ENCODE measurements at regions of chr17 and their contacts with region 1.

Region 1: GRCh38 chr17:75319904-75320691 is 30.9 kb upstream of the SLC25A19 start:
- DNase-seq: no peak
- H3K4me3 ChIP-seq: no peak overlapping the region
- H3K4me3 Mint-ChIP-seq: no peak overlapping the region
- H3K27ac ChIP-seq: no peak overlapping the region
- H3K27ac Mint-ChIP-seq: no peak overlapping the region
- H3K4me1 ChIP-seq: peaks cover 6% of the 10 kb centered on the region
- H3K4me1 Mint-ChIP-seq: peaks cover 7 to 12% (median 9%) of the 10 kb centered on the region in 3 donors
- H3K27me3 ChIP-seq: no peaks in the 10 kb centered on the region
- H3K27me3 Mint-ChIP-seq: no peaks in the 10 kb centered on the region

Region 2: DNA sequence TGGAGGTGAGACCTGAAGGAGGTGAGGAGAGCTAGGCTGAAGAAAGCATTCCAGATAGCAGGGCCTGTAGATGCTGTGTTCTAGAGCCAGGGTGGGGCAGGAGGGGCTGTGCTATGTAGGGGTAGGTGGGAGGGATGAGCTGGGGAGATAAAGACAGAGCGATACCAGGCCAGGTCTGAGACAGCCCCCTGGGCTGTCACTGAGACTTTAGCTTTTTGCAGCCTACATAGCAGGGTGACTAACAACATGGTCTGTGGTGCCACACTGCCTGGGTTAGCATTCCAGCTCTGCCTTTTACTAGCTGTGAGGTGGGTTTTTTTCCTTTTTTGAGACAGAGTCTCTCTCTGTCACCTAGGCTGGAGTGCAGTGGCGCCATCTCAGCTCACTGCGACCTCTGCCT is 100.3 kb before region 1 on chr17:
- CTCF ChIA-PET with region 1: no interaction called
- POLR2A ChIA-PET with region 1: no interaction called
- DNase-seq: no peak
- H3K4me3 ChIP-seq: no peak overlapping the region
- H3K4me3 Mint-ChIP-seq: no peak overlapping the region
- H3K27ac ChIP-seq: no peak overlapping the region
- H3K27ac Mint-ChIP-seq: peak overlapping the region in 2 of 8 donors; percentile 4 to 69
- H3K4me1 ChIP-seq: no peaks in the 10 kb centered on the region
- H3K4me1 Mint-ChIP-seq: peaks cover 0 to 7% (median 0%) of the 10 kb centered on the region in 3 donors
- H3K27me3 ChIP-seq: no peaks in the 10 kb centered on the region
- H3K27me3 Mint-ChIP-seq: no peaks in the 10 kb centered on the region

Region 3: DNA sequence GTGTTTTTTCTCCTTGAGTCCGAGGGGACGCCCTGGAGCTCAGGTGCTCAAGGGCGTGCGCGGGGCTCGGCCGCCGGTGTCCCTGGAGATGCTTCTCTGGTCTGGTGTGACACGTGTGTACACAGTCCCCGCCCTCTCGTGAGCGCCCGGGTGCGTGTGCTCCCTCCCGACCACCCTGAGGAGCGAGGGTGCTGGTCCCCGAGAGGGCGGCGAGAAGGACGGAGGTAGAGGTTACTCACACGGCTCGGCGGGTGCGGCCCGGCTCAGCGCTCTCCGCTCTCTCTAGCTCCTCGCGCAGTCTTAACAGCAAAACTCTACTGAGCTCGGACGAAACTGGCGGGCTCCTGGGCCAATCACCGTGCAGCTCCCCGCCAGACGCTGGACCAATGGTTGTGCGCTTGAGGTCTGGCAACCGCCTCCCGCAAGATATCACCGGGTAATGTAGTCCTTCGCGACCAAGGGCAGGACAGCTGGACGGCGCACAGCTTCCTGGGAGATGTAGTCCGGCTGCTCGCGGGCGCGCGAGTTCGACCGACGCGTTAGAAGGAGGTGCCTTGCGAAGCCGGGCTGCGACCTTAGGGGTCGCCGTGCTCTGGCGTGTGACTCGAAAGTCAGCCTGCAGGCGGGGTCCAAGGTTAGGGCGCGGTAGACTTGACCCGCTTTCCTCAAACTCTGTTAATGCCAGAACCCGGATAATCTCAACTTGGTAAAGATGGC is 30.8 kb before region 1 on chr17 and contains the start of gene SLC25A19:
- CTCF ChIA-PET with region 1: interaction called, 14 read pairs
- POLR2A ChIA-PET with region 1: interaction called, 3 read pairs
- DNase-seq: peak; percentile 96 to 98 (median 97)
- H3K4me3 ChIP-seq: peak within 1 kb of the TSS; percentile 95
- H3K4me3 Mint-ChIP-seq: peak within 1 kb of the TSS; percentile 95 to 100 (median 98)
- H3K27ac ChIP-seq: peak within 1 kb of the TSS; percentile 96
- H3K27ac Mint-ChIP-seq: peak within 1 kb of the TSS; percentile 95 to 100 (median 100)
- H3K4me1 ChIP-seq: peaks cover 10% of the 10 kb centered on the region
- H3K4me1 Mint-ChIP-seq: peaks cover 10 to 23% (median 18%) of the 10 kb centered on the region in 3 donors
- H3K27me3 ChIP-seq: no peaks in the 10 kb centered on the region
- H3K27me3 Mint-ChIP-seq: peaks cover 0 to 3% of the 10 kb centered on the region in 2 donors
- total RNA-seq, gene SLC25A19: 119 to 126 TPM

Region 4: GRCh38 chr17:75345514-75346167 is 25.5 kb after region 1 on chr17:
- CTCF ChIA-PET with region 1: interaction called, 18 read pairs
- POLR2A ChIA-PET with region 1: no interaction called
- DNase-seq: peak in 3 of 5 donors; percentile 33 to 69 (median 61)
- H3K4me3 ChIP-seq: peak overlapping the region; percentile 33
- H3K4me3 Mint-ChIP-seq: peak overlapping the region; percentile 25 to 85 (median 79)
- H3K27ac ChIP-seq: no peak overlapping the region
- H3K27ac Mint-ChIP-seq: peak overlapping the region; percentile 83 to 98 (median 90)
- H3K4me1 ChIP-seq: peaks cover 83% of the 10 kb centered on the region
- H3K4me1 Mint-ChIP-seq: peaks cover 84 to 98% (median 97%) of the 10 kb centered on the region in 3 donors
- H3K27me3 ChIP-seq: no peaks in the 10 kb centered on the region
- H3K27me3 Mint-ChIP-seq: no peaks in the 10 kb centered on the region

Region 5: GRCh38 chr17:75367317-75367716 is 47.2 kb after region 1 on chr17:
- CTCF ChIA-PET with region 1: no interaction called
- POLR2A ChIA-PET with region 1: no interaction called
- DNase-seq: no peak
- H3K4me3 ChIP-seq: no peak overlapping the region
- H3K4me3 Mint-ChIP-seq: no peak overlapping the region
- H3K27ac ChIP-seq: peak overlapping the region; percentile 32
- H3K27ac Mint-ChIP-seq: no peak overlapping the region
- H3K4me1 ChIP-seq: peaks cover 56% of the 10 kb centered on the region
- H3K4me1 Mint-ChIP-seq: peaks cover 81 to 99% (median 94%) of the 10 kb centered on the region in 3 donors
- H3K27me3 ChIP-seq: no peaks in the 10 kb centered on the region
- H3K27me3 Mint-ChIP-seq: no peaks in the 10 kb centered on the region

Region 6: DNA sequence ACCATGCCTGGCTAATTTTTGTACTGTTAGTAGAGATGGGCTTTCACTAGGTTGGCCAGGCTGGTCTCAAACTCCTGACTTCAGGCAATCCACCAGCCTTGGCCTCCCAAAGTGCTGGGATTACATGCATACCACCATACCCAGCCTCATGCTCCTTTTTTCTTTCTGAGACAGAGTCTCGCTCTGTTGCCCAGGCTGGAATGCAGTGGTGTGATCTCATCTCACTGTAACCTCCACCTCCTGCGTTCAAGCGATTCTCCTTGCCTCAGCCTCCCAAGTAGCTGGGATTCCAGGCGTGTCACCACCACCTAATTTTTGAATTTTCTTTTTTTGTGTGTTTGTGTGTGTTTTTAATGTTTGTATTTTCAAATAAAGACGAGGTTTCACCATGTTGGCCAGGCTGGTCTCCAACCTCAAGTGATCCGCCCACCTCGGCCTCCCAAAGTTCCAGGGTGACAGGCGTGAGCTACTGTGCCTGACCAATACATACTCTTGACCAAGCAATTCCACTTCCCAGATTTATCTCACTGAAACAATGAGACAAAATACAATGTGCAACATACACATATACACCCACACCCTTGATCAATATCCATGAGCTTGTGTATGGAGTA is 80.3 kb after region 1 on chr17:
- CTCF ChIA-PET with region 1: interaction called, 78 read pairs
- POLR2A ChIA-PET with region 1: no interaction called
- DNase-seq: no peak
- H3K4me3 ChIP-seq: no peak overlapping the region
- H3K4me3 Mint-ChIP-seq: peak overlapping the region in 4 of 7 donors; percentile 11 to 78 (median 28)
- H3K27ac ChIP-seq: no peak overlapping the region
- H3K27ac Mint-ChIP-seq: peak overlapping the region in 2 of 8 donors; percentile 18 to 71
- H3K4me1 ChIP-seq: peaks cover 57% of the 10 kb centered on the region
- H3K4me1 Mint-ChIP-seq: peaks cover 50 to 74% (median 68%) of the 10 kb centered on the region in 3 donors
- H3K27me3 ChIP-seq: no peaks in the 10 kb centered on the region
- H3K27me3 Mint-ChIP-seq: no peaks in the 10 kb centered on the region

Region 7: GRCh38 chr17:75412455-75413317 is 92.6 kb after region 1 on chr17:
- CTCF ChIA-PET with region 1: interaction called, 78 read pairs
- POLR2A ChIA-PET with region 1: interaction called, 5 read pairs
- DNase-seq: peak; percentile 37 to 83 (median 66)
- H3K4me3 ChIP-seq: no peak overlapping the region
- H3K4me3 Mint-ChIP-seq: peak overlapping the region in 3 of 7 donors; percentile 33 to 46 (median 42)
- H3K27ac ChIP-seq: no peak overlapping the region
- H3K27ac Mint-ChIP-seq: peak overlapping the region in 7 of 8 donors; percentile 2 to 66 (median 22)
- H3K4me1 ChIP-seq: peaks cover 13% of the 10 kb centered on the region
- H3K4me1 Mint-ChIP-seq: peaks cover 9 to 15% (median 11%) of the 10 kb centered on the region in 3 donors
- H3K27me3 ChIP-seq: no peaks in the 10 kb centered on the region
- H3K27me3 Mint-ChIP-seq: peaks cover 10 to 13% of the 10 kb centered on the region in 2 donors

Measured in CD8-positive, alpha-beta memory T cell (primary cell).